AG04450 (cell line): ENCODE measurements at regions of chr19 and their contacts with region 1.

Region 1: GRCh38 chr19:16702118-16702517 is 17.5 kb upstream of the NWD1 start:
- DNase-seq: peak; percentile 13
- H3K4me3 ChIP-seq: no peak overlapping the region
- H3K27ac ChIP-seq: peak overlapping the region; percentile 31
- H3K27me3 ChIP-seq: peaks cover 5% of the 10 kb centered on the region
- CTCF ChIP-seq: no peak

Region 2: DNA sequence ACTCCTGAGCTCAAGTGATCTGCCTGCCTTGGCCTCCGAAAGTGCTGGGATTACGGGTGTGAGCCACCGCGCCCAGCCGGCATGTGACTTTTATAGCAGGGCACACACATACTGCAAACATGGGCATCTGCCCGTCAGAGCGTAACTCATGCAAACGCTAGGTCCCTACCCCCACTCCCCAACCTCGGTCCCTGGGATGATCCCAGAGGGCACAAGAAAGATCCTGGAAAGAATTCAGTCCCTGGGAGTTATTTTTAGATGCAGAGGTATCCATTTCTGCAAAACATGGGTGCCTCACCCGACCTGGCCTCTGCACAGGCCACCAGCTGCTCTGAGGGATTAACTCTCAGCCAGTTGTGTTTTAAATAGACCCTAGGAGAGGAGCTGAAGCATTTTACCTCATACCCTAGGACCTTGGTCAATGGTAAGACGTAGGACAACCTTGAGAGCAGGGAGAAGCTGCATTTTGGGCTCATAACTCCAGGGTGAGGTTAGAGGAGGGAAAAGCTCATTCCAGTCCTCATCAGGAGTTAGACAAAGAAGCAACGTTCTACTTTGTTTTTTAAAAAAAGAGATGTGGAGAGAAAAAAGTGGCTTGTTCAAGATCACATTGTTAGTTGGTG is 30.4 kb before region 1 on chr19:
- CTCF ChIA-PET with region 1: no interaction called
- POLR2A ChIA-PET with region 1: interaction called, 10 read pairs
- DNase-seq: no peak
- H3K4me3 ChIP-seq: no peak overlapping the region
- H3K27ac ChIP-seq: no peak overlapping the region
- H3K27me3 ChIP-seq: no peaks in the 10 kb centered on the region
- CTCF ChIP-seq: no peak

Region 3: GRCh38 chr19:16684216-16684615 is 17.9 kb before region 1 on chr19:
- CTCF ChIA-PET with region 1: no interaction called
- POLR2A ChIA-PET with region 1: no interaction called
- DNase-seq: no peak
- H3K4me3 ChIP-seq: no peak overlapping the region
- H3K27ac ChIP-seq: no peak overlapping the region
- H3K27me3 ChIP-seq: no peaks in the 10 kb centered on the region
- CTCF ChIP-seq: no peak

Region 4: GRCh38 chr19:16751733-16752132 is 49.6 kb after region 1 on chr19:
- CTCF ChIA-PET with region 1: no interaction called
- POLR2A ChIA-PET with region 1: no interaction called
- DNase-seq: no peak
- H3K4me3 ChIP-seq: no peak overlapping the region
- H3K27ac ChIP-seq: no peak overlapping the region
- H3K27me3 ChIP-seq: no peaks in the 10 kb centered on the region
- CTCF ChIP-seq: no peak

Region 5: DNA sequence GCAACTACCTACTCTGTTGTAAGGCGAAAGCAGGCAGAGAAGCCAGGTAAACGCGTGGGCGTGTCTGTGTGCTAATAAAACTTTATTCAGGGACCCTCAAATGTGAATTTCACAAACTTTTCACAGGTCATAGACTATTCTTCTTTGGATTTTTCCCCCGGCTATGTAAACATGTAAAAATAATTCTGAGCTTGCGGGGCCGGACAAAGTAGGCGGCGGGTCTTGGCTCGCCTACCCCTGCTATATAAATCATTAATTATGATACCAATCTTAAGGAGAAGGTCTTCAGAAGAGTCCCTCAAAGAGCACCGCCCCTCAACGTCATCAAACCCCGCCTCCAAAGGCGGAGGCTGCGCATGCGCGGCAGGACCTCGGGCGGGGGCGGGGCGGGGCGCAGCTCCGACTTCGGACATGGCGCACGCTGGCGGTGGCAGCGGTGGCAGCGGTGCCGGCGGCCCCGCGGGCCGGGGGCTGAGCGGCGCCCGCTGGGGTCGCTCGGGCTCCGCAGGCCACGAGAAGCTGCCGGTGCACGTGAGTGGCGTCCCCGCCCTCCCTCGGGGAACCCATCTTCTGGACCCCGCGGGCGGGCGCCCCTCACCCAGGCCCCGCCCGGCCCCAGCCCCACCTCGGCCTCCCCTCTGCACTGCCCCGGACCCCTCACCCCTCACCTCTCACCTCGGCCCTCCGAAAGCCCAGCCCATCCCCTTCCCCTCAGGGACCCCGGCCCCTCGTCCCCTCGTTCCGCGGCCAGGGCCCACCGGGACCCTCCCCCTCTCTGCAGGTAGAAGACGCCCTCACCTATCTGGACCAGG is 127.1 kb after region 1 on chr19 and contains the start of gene SIN3B:
- CTCF ChIA-PET with region 1: no interaction called
- POLR2A ChIA-PET with region 1: no interaction called
- DNase-seq: peak; percentile 54
- H3K4me3 ChIP-seq: peak within 1 kb of the TSS; percentile 92
- H3K27ac ChIP-seq: peak within 1 kb of the TSS; percentile 21
- H3K27me3 ChIP-seq: no peaks in the 10 kb centered on the region
- CTCF ChIP-seq: no peak
- polyA plus RNA-seq, gene SIN3B: 18.8 and 26.2 TPM in 2 replicates